ENCODE measurements at regions of chr6 and their contacts with region 1.

Region 1: GRCh38 chr6:163956571-163957407 is 542.3 kb downstream of the QKI start:
- DNase-seq: peak; percentile 73
- H3K4me3 Mint-ChIP-seq: no peak overlapping the region
- H3K27ac Mint-ChIP-seq: no peak overlapping the region
- H3K4me1 Mint-ChIP-seq: peaks cover 3% of the 10 kb centered on the region
- H3K27me3 Mint-ChIP-seq: peaks cover 18% of the 10 kb centered on the region

Region 2: DNA sequence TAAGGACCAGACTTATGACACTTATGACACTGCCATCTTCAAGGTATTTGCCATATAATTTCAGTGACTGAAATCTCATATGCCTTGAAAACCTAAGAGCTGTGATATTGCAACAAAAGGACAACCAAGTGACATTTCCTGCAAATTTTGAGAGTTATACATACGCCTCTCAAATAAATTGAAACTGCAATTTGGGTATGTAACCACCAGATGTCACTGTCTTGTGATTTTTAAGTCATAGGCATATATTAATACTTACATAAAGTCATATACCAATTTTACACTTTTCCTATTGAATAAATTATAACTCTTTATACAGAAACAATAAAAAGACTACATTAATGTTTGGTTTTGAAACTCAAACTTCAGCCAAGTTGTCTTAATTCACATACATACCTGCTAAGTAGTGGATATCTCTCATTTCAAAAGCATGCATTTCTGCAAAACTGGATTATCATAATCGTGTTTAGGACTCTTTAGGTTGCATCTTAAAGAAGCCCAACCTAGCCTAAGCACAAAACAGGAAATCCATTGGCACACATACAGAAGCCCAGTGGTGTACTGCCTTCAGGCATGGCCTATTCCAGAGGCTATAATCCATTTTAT is 1048.8 kb before region 1 on chr6:
- CTCF ChIA-PET with region 1: interaction called, 4 read pairs
- POLR2A ChIA-PET with region 1: no interaction called
- intact Hi-C with region 1: loop called (anchors 5 kb)
- DNase-seq: no peak
- H3K4me3 Mint-ChIP-seq: no peak overlapping the region
- H3K27ac Mint-ChIP-seq: no peak overlapping the region
- H3K4me1 Mint-ChIP-seq: no peaks in the 10 kb centered on the region
- H3K27me3 Mint-ChIP-seq: peaks cover 3% of the 10 kb centered on the region

Region 3: GRCh38 chr6:163637524-163637923 is 319.3 kb before region 1 on chr6:
- CTCF ChIA-PET with region 1: no interaction called
- POLR2A ChIA-PET with region 1: no interaction called
- intact Hi-C with region 1: no loop called
- DNase-seq: no peak
- H3K4me3 Mint-ChIP-seq: no peak overlapping the region
- H3K27ac Mint-ChIP-seq: no peak overlapping the region
- H3K4me1 Mint-ChIP-seq: no peaks in the 10 kb centered on the region
- H3K27me3 Mint-ChIP-seq: peaks cover 5% of the 10 kb centered on the region

Region 4: GRCh38 chr6:164010441-164011103 is 53.8 kb after region 1 on chr6:
- CTCF ChIA-PET with region 1: no interaction called
- POLR2A ChIA-PET with region 1: no interaction called
- intact Hi-C with region 1: no loop called
- DNase-seq: no peak
- H3K4me3 Mint-ChIP-seq: no peak overlapping the region
- H3K27ac Mint-ChIP-seq: no peak overlapping the region
- H3K4me1 Mint-ChIP-seq: no peaks in the 10 kb centered on the region
- H3K27me3 Mint-ChIP-seq: peaks cover 2% of the 10 kb centered on the region

Measured in activated CD4-positive, alpha-beta memory T cell treated with anti-CD3 and anti-CD28 coated beads for 36 hours (primary cell).